ENCODE measurements at regions of chr1 and their contacts with region 1.

Region 1: DNA sequence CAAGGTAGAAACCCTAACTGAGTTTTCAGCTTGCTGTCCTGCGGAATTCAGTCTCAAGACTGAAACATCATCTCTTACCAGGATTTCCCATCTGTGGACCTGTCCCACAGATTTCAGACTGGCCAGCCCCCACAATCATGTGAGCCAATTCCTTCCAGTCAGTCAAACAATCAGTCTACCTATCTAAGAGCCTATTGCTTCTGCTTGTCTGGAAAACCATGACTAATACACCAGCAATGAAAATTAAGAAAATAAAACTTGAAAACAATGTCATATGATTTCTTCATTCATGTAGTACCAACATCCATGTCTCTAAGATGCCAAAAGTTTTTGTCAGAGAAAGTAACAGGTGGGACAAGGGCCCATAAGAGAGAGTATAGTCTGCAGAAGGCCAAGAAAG is 57.6 kb upstream of the CRB1 start:
- DNase-seq: no peak
- ATAC-seq: no peak
- H3K4me3 ChIP-seq: no peak overlapping the region
- H3K27ac ChIP-seq: no peak overlapping the region
- H3K4me1 ChIP-seq: no peaks in the 10 kb centered on the region
- H3K27me3 ChIP-seq: no peaks in the 10 kb centered on the region
- CTCF ChIP-seq: no peak
- EP300 ChIP-seq: no peak
- POLR2A ChIP-seq: no peak
- RAD21 ChIP-seq: no peak

Region 2: DNA sequence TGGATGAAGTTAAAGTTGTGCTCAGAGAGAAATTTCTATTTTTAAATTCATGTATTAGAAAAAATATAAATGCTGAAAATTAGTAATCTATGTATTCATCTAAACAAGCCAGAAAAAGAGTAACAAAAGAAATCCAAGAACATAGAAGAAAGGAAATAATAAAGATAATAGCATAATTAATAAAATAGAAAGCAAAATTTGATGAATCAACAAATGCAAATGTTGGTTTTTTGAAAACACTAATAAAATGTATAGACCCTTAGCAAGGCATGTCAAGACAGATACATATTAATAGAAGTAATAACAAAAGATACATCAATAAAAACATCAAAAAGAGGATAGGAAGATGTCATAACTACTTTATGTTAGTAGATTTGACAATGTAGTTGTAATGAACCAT is 161.3 kb before region 1 on chr1:
- CTCF ChIA-PET with region 1: no interaction called
- POLR2A ChIA-PET with region 1: no interaction called
- in situ Hi-C with region 1: no loop called
- intact Hi-C with region 1: no loop called
- DNase-seq: no peak
- ATAC-seq: no peak
- H3K4me3 ChIP-seq: no peak overlapping the region
- H3K27ac ChIP-seq: no peak overlapping the region
- H3K4me1 ChIP-seq: no peaks in the 10 kb centered on the region
- H3K27me3 ChIP-seq: no peaks in the 10 kb centered on the region
- CTCF ChIP-seq: no peak
- EP300 ChIP-seq: no peak
- POLR2A ChIP-seq: no peak
- RAD21 ChIP-seq: no peak

Region 3: DNA sequence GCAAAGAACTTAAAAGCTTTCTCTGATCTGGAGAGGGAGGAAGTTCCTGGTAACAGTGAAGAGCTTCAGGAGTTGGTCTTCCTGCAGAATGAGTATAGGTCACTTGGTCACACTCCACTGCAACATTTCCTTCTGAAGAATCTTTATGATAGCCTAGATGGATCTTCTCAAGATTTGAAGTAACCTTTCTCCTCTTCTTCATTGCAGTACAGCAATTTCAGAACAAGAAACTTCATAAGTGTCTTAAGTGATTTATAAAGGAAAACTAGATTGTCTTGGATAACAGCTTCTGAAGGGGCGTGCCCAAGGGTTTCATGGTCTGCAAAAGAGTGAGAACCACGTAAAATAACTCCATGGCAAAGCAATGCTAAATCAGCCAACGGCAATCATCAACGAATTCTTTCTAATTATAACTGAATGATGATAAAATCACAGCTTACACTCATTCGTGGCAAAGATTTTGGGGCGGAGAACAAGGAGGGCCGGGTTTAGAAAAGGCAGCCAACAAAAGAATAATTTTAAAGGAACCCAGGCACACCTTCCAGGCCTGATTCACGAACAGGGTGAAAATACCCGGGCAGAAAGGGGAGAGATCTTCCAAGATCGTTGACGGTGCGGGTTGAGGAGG is 10.0 kb before region 1 on chr1:
- CTCF ChIA-PET with region 1: no interaction called
- POLR2A ChIA-PET with region 1: no interaction called
- in situ Hi-C with region 1: no loop called
- intact Hi-C with region 1: loop called (anchors 1 kb)
- DNase-seq: no peak
- ATAC-seq: peak; percentile 12; the same call in 1 of the 3 replicates
- H3K4me3 ChIP-seq: peak overlapping the region; percentile 75 to 96 (median 80)
- H3K27ac ChIP-seq: peak overlapping the region; percentile 89
- H3K4me1 ChIP-seq: peaks cover 48% of the 10 kb centered on the region
- H3K27me3 ChIP-seq: no peaks in the 10 kb centered on the region
- CTCF ChIP-seq: no peak
- EP300 ChIP-seq: no peak
- POLR2A ChIP-seq: no peak
- RAD21 ChIP-seq: no peak